Activated CD4-positive, alpha-beta T cell treated with anti-CD3 and anti-CD28 coated beads for 36 hours (primary cell): ENCODE measurements at regions of chr11 and their contacts with region 1.

Region 1: GRCh38 chr11:82867495-82868082 is 32.6 kb downstream of the PRCP start:
- DNase-seq: peak; percentile 87
- ATAC-seq: peak; percentile 63
- H3K4me3 Mint-ChIP-seq: no peak overlapping the region
- H3K27ac Mint-ChIP-seq: no peak overlapping the region
- H3K4me1 Mint-ChIP-seq: peaks cover 14% of the 10 kb centered on the region
- H3K27me3 Mint-ChIP-seq: no peaks in the 10 kb centered on the region

Region 2: DNA sequence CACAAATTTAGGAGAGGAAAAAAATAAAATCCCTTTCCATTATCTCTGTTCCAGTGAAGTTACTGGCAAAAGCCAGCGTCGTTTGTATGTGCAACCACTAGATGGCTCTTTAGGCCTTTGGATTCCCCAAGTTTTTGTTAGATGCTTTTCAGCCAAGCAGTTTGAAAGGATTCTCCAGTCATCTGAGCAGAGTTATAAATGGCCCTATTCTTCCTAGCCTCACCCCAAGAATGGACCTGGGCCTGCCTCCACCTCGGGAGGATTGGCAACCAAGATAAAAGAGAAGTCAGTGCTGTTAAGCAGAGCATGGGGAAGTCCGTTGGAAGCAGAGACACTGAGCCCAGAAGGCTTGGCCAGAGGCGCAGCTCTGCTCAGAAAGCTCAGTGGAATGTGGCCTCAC is 149.3 kb before region 1 on chr11:
- CTCF ChIA-PET with region 1: interaction called, 15 read pairs
- POLR2A ChIA-PET with region 1: no interaction called
- intact Hi-C with region 1: loop called (anchors 1 to 2 kb)
- DNase-seq: peak; percentile 41
- ATAC-seq: peak; percentile 55
- H3K4me3 Mint-ChIP-seq: no peak overlapping the region
- H3K27ac Mint-ChIP-seq: no peak overlapping the region
- H3K4me1 Mint-ChIP-seq: no peaks in the 10 kb centered on the region
- H3K27me3 Mint-ChIP-seq: peaks cover under 1% of the 10 kb centered on the region

Region 3: DNA sequence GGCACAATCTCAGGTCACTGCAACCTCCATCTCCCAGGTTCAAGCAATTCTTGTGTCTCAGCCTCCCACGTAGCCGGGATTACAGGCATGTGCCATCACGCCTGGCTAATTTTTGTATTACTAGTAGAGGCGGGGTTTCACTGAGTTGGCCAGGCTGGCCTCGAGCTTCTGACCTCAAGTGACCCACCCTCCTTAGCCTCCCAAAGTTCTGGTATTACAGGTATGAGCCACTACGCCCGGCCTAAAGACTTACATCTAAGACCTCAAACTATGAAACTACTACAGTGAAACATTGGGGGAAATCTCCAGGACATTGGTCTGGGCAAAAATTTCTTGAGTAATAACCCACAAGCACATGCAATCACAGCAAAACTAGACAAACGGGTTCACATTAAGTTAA is 120.1 kb before region 1 on chr11:
- CTCF ChIA-PET with region 1: no interaction called
- POLR2A ChIA-PET with region 1: no interaction called
- intact Hi-C with region 1: no loop called
- DNase-seq: no peak
- ATAC-seq: no peak
- H3K4me3 Mint-ChIP-seq: no peak overlapping the region
- H3K27ac Mint-ChIP-seq: no peak overlapping the region
- H3K4me1 Mint-ChIP-seq: peaks cover 21% of the 10 kb centered on the region
- H3K27me3 Mint-ChIP-seq: peaks cover 2% of the 10 kb centered on the region

Region 4: DNA sequence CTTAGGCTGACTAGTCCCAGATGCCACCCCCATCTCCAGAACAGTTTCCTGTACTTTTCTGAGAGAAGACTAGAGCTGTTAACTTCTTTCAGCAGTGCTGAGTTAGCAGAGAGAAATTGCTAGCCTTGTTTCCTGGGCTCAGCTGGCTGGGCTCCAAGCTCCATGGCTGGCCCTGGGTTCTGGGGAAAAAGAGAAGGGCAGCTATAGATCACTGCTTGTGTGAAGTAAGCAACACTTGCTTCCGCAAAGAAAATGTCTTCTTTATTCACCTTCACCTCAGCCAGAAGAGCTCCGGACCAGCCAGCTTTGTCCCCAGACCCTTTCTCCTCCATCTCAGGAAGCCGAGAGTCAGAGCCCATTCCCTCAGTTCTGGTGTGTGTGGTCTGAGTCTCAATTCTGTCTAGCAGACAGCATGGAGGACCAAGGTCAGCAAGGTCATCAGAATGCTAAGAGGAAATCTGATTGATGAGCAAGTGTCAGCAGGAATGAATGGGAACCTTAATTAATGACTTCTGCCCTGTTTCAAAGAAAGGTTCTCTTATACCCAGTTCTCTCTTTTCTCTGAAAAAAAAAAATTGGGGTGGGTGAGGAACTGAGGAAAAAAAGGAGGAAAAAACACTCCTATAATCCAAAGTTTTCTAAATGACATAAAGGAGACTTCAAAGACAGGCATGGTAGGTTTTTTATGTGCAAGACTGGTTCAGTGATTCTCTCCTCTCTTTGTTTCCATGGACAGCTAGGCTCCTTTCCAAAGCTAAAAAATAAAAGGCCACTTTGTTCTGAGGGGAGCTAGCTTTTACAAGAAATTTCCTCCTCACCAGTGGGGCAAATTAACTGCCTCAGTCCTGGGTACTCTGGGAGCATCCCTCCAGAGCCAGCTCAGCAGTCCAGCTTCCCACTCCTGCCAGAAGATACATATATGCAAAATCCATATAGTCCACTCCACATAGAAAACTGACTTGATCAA is 70.3 kb before region 1 on chr11:
- CTCF ChIA-PET with region 1: no interaction called
- POLR2A ChIA-PET with region 1: no interaction called
- intact Hi-C with region 1: no loop called
- DNase-seq: no peak
- ATAC-seq: no peak
- H3K4me3 Mint-ChIP-seq: no peak overlapping the region
- H3K27ac Mint-ChIP-seq: no peak overlapping the region
- H3K4me1 Mint-ChIP-seq: no peaks in the 10 kb centered on the region
- H3K27me3 Mint-ChIP-seq: peaks cover 4% of the 10 kb centered on the region

Region 5: GRCh38 chr11:82889133-82890001 is 21.8 kb after region 1 on chr11:
- CTCF ChIA-PET with region 1: interaction called, 13 read pairs
- POLR2A ChIA-PET with region 1: no interaction called
- intact Hi-C with region 1: no loop called
- DNase-seq: no peak
- ATAC-seq: no peak
- H3K4me3 Mint-ChIP-seq: no peak overlapping the region
- H3K27ac Mint-ChIP-seq: no peak overlapping the region
- H3K4me1 Mint-ChIP-seq: no peaks in the 10 kb centered on the region
- H3K27me3 Mint-ChIP-seq: no peaks in the 10 kb centered on the region

Region 6: GRCh38 chr11:82927254-82927880 is 59.8 kb after region 1 on chr11:
- CTCF ChIA-PET with region 1: interaction called, 11 read pairs
- POLR2A ChIA-PET with region 1: no interaction called
- intact Hi-C with region 1: loop called (anchors 1 to 10 kb)
- DNase-seq: peak; percentile 22
- ATAC-seq: peak; percentile 81
- H3K4me3 Mint-ChIP-seq: no peak overlapping the region
- H3K27ac Mint-ChIP-seq: no peak overlapping the region
- H3K4me1 Mint-ChIP-seq: peaks cover 21% of the 10 kb centered on the region
- H3K27me3 Mint-ChIP-seq: no peaks in the 10 kb centered on the region

Region 7: GRCh38 chr11:83249972-83250593 is 382.5 kb after region 1 on chr11:
- CTCF ChIA-PET with region 1: interaction called, 37 read pairs
- POLR2A ChIA-PET with region 1: interaction called, 3 read pairs
- intact Hi-C with region 1: loop called (anchors 1 kb)
- DNase-seq: peak; percentile 10
- ATAC-seq: peak; percentile 75
- H3K4me3 Mint-ChIP-seq: no peak overlapping the region
- H3K27ac Mint-ChIP-seq: no peak overlapping the region
- H3K4me1 Mint-ChIP-seq: peaks cover 3% of the 10 kb centered on the region
- H3K27me3 Mint-ChIP-seq: no peaks in the 10 kb centered on the region

Region 8: DNA sequence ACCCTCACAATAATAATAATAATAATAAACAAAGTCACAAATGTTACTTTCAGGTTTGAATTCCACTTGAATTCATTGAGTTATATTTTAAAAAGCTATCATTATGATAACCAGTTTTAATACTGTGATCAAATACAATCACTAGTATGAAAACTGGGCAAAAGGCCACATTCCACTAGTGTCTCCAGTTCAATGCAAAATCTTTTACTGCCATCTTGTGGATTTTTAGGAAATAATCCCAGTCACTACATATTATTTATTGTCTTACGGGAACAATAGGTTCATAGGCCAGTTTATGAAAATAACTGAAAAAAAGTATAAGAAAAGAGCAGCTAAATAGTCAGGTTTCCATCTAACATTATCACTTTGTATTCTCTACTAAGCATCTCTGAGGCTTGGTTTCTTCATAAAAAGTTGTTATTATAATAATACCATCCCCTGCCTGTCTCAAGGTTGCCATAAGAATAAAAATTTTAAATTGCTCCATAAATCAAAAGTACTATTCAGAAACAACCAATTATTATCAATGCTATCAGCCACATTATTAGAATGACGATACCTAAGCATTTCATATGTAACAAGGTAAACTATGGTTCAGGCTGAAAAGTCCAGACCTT is 952.5 kb after region 1 on chr11:
- CTCF ChIA-PET with region 1: interaction called, 7 read pairs
- POLR2A ChIA-PET with region 1: interaction called, 3 read pairs
- intact Hi-C with region 1: loop called (anchors 1 to 5 kb)
- DNase-seq: no peak
- ATAC-seq: no peak
- H3K4me3 Mint-ChIP-seq: no peak overlapping the region
- H3K27ac Mint-ChIP-seq: no peak overlapping the region
- H3K4me1 Mint-ChIP-seq: no peaks in the 10 kb centered on the region
- H3K27me3 Mint-ChIP-seq: no peaks in the 10 kb centered on the region